Naive thymus-derived CD4-positive, alpha-beta T cell (primary cell): ENCODE measurements at regions of chr16 and their contacts with region 1.

Region 1: GRCh38 chr16:53703590-53704444 is at the starts of genes FTO and RPGRIP1L:
- DNase-seq: peak; percentile 85 to 97 (median 93)
- ATAC-seq: peak; percentile 95
- H3K4me3 ChIP-seq: peak within 1 kb of the TSS; percentile 78
- H3K4me3 Mint-ChIP-seq: peak within 1 kb of the TSS; percentile 85 to 100 (median 98)
- H3K27ac ChIP-seq: peak within 1 kb of the TSS; percentile 66
- H3K27ac Mint-ChIP-seq: peak within 1 kb of the TSS; percentile 90 to 99 (median 95)
- H3K4me1 ChIP-seq: peaks cover 15 to 16% of the 10 kb centered on the region in 2 donors
- H3K4me1 Mint-ChIP-seq: peaks cover 17 to 48% (median 42%) of the 10 kb centered on the region in 7 donors
- H3K27me3 ChIP-seq: no peaks in the 10 kb centered on the region
- H3K27me3 Mint-ChIP-seq: no peaks in the 10 kb centered on the region
- total RNA-seq, gene FTO: 47.2 to 63.5 (median 57.9) TPM
- total RNA-seq, gene RPGRIP1L: 2.0 to 6.1 (median 3.6) TPM

Region 2: DNA sequence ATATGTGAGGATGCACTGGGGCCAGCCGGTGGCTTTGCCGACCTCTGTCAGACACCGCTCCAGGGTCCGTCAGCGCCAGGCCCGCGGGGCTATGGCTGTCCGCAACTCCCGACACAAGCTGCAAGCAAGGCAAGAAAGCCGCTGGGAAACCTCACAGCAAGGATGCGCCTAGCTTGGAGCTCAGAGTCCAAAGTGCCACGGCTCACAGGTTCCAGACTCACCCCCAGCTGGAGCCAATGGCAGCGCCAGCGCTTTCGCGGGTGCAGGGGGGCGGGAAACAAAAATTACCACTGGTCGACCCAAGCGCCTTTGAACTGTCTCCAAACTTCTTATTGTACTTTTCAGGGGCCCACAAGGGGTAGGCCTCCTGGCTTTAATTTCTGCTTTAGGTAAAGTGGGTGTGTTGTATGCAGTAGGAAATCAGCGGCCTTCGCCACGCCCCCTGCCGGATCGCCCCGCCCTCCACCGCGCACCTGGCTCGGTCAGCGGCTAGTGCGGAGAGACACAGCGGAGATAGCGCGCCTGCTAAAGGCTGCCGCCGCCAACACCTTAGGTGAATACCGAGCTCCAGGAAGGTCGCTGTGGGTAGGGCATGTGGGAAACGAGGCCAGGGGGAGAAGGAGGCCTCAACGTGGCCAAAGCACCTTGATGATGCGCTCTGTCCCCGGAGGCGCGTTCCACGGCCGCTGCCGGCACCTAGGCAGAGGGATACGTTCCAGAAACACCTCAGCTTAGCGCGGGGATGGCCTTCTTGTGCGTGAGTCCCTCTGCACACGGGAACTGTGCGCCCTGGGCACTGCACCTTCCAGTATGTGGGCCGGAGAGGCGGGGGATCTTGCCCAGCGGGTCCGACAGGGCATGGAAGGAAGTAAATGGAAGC is 330.6 kb before region 1 on chr16:
- CTCF ChIA-PET with region 1: no interaction called
- POLR2A ChIA-PET with region 1: no interaction called
- intact Hi-C with region 1: loop called in 1 of 2 experiments (anchors 5 kb)
- DNase-seq: peak; percentile 64 to 87 (median 84)
- ATAC-seq: peak; percentile 96
- H3K4me3 ChIP-seq: peak overlapping the region; percentile 84
- H3K4me3 Mint-ChIP-seq: peak overlapping the region in 1 of 10 donors; percentile 86
- H3K27ac ChIP-seq: peak overlapping the region; percentile 67
- H3K27ac Mint-ChIP-seq: peak overlapping the region in 8 of 9 donors; percentile 48 to 95 (median 88)
- H3K4me1 ChIP-seq: peaks cover 4 to 7% of the 10 kb centered on the region in 2 donors
- H3K4me1 Mint-ChIP-seq: peaks cover 11 to 44% (median 20%) of the 10 kb centered on the region in 7 donors
- H3K27me3 ChIP-seq: no peaks in the 10 kb centered on the region
- H3K27me3 Mint-ChIP-seq: peaks cover 0 to 32% (median 0%) of the 10 kb centered on the region in 5 donors

Region 3: GRCh38 chr16:53503270-53503923 is 200.4 kb before region 1 on chr16:
- CTCF ChIA-PET with region 1: no interaction called
- POLR2A ChIA-PET with region 1: no interaction called
- intact Hi-C with region 1: loop called (anchors 1 kb)
- DNase-seq: peak; percentile 94 to 100 (median 100)
- ATAC-seq: peak; percentile 94
- H3K4me3 ChIP-seq: peak overlapping the region; percentile 66
- H3K4me3 Mint-ChIP-seq: peak overlapping the region; percentile 86 to 97 (median 94)
- H3K27ac ChIP-seq: peak overlapping the region; percentile 79
- H3K27ac Mint-ChIP-seq: peak overlapping the region; percentile 82 to 98 (median 92)
- H3K4me1 ChIP-seq: peaks cover 25 to 38% of the 10 kb centered on the region in 2 donors
- H3K4me1 Mint-ChIP-seq: peaks cover 36 to 54% (median 45%) of the 10 kb centered on the region in 7 donors
- H3K27me3 ChIP-seq: no peaks in the 10 kb centered on the region
- H3K27me3 Mint-ChIP-seq: no peaks in the 10 kb centered on the region

Region 4: GRCh38 chr16:53549970-53550690 is 153.7 kb before region 1 on chr16:
- CTCF ChIA-PET with region 1: no interaction called
- POLR2A ChIA-PET with region 1: no interaction called
- intact Hi-C with region 1: loop called in 1 of 2 experiments (anchors 2 kb)
- DNase-seq: peak in 8 of 9 donors; percentile 33 to 66 (median 52)
- ATAC-seq: peak; percentile 71
- H3K4me3 ChIP-seq: no peak overlapping the region
- H3K4me3 Mint-ChIP-seq: peak overlapping the region in 1 of 10 donors; percentile 7
- H3K27ac ChIP-seq: no peak overlapping the region
- H3K27ac Mint-ChIP-seq: no peak overlapping the region
- H3K4me1 ChIP-seq: peaks cover 8 to 15% of the 10 kb centered on the region in 2 donors
- H3K4me1 Mint-ChIP-seq: peaks cover 11 to 39% (median 27%) of the 10 kb centered on the region in 7 donors
- H3K27me3 ChIP-seq: peaks cover 0 to 8% of the 10 kb centered on the region in 2 donors
- H3K27me3 Mint-ChIP-seq: peaks cover 17 to 44% (median 19%) of the 10 kb centered on the region in 5 donors

Region 5: DNA sequence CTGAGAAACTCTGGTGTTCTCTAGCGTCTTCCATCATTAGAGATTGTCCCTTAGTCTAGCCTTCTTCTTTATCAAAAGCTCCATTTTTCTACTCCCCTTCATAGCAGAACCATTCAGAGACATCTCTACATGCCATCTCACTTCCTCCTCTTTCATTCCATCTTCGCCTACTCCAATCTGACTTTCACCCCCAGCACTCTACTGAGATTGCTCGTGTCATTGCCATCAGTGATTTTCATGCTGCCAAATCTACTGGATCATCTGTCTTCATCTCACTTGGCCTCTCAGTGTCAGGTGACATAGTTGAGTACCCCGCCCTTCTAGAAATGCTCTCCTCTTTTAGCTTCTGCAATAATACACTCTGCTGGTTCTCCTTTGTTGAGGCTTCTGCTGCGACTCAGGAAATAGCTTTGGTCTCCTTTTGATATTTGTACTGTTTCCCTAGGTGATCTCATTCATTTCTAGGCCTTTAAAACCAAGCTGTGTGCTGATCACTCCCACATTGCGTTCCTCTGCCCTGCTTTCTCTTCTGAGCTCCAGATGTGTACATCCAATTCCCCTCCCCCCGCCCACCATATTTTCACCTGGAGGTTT is 119.2 kb after region 1 on chr16:
- CTCF ChIA-PET with region 1: no interaction called
- POLR2A ChIA-PET with region 1: no interaction called
- intact Hi-C with region 1: loop called in 1 of 2 experiments (anchors 1 kb)
- DNase-seq: peak in 7 of 9 donors; percentile 63 to 86 (median 77)
- ATAC-seq: peak; percentile 97
- H3K4me3 ChIP-seq: no peak overlapping the region
- H3K4me3 Mint-ChIP-seq: no peak overlapping the region
- H3K27ac ChIP-seq: peak overlapping the region; percentile 47
- H3K27ac Mint-ChIP-seq: no peak overlapping the region
- H3K4me1 ChIP-seq: peaks cover 8 to 23% of the 10 kb centered on the region in 2 donors
- H3K4me1 Mint-ChIP-seq: peaks cover 0 to 19% (median 16%) of the 10 kb centered on the region in 7 donors
- H3K27me3 ChIP-seq: no peaks in the 10 kb centered on the region
- H3K27me3 Mint-ChIP-seq: no peaks in the 10 kb centered on the region

Region 6: GRCh38 chr16:53913099-53913870 is 209.5 kb after region 1 on chr16:
- CTCF ChIA-PET with region 1: no interaction called
- POLR2A ChIA-PET with region 1: no interaction called
- intact Hi-C with region 1: loop called in 1 of 2 experiments (anchors 5 kb)
- DNase-seq: peak in 1 of 9 donors; percentile 25
- ATAC-seq: no peak
- H3K4me3 ChIP-seq: no peak overlapping the region
- H3K4me3 Mint-ChIP-seq: peak overlapping the region in 8 of 10 donors; percentile 0 to 64 (median 38)
- H3K27ac ChIP-seq: no peak overlapping the region
- H3K27ac Mint-ChIP-seq: peak overlapping the region in 6 of 9 donors; percentile 17 to 72 (median 52)
- H3K4me1 ChIP-seq: peaks cover 15 to 33% of the 10 kb centered on the region in 2 donors
- H3K4me1 Mint-ChIP-seq: peaks cover 0 to 49% (median 0%) of the 10 kb centered on the region in 7 donors
- H3K27me3 ChIP-seq: no peaks in the 10 kb centered on the region
- H3K27me3 Mint-ChIP-seq: no peaks in the 10 kb centered on the region

Region 7: DNA sequence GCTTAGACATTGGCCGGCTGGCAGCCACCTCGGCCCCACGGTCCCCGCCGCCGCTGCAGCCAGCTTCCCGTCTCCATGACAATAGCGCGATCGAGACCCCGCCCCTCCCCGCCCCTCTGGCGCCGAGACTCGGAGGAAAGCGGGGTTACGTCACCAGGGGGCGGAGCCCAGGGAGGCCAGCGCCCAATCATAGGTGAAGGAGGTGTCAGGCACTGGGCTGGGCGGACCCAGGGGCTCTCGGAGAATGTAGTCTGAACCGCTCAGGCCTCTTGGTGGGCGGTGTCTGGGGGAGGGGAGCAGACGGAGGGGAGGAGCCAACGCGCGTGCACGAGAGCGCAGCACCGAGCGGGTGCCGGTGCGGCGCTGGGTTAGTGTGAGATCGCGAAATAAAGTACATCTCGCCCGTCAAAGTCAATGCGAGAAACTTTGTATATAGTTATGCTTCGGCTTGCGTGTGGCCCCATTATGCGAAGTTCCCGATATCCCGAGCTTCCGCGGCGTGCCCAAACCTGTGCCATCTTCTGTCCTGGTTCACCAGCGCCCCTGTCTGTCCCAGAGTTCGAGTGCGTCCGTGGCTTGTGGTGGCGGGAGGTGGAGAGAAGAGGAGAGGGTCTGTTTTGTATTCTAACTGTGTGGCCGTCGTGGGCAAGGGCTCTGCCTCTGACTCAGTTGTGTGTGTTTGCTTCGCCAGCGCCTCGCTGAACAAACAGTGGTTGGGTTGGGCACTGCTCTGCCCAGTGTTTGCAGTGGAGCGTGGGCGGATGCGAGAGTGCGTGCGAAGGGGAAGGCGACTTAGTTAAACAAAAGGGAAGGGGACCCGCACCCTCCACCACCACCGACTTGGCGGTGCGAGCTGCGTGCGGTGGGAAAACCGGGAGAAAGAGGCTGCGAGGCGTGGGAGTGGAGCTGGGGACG is 1225.5 kb after region 1 on chr16:
- CTCF ChIA-PET with region 1: no interaction called
- POLR2A ChIA-PET with region 1: no interaction called
- intact Hi-C with region 1: loop called in 1 of 2 experiments (anchors 1 kb)
- DNase-seq: peak; percentile 82 to 96 (median 88)
- ATAC-seq: peak; percentile 97
- H3K4me3 ChIP-seq: peak overlapping the region; percentile 70
- H3K4me3 Mint-ChIP-seq: peak overlapping the region; percentile 84 to 96 (median 93)
- H3K27ac ChIP-seq: no peak overlapping the region
- H3K27ac Mint-ChIP-seq: peak overlapping the region in 7 of 9 donors; percentile 13 to 93 (median 59)
- H3K4me1 ChIP-seq: peaks cover 9 to 12% of the 10 kb centered on the region in 2 donors
- H3K4me1 Mint-ChIP-seq: peaks cover 16 to 36% (median 32%) of the 10 kb centered on the region in 7 donors
- H3K27me3 ChIP-seq: peaks cover 8 to 47% of the 10 kb centered on the region in 2 donors
- H3K27me3 Mint-ChIP-seq: peaks cover 63 to 73% (median 68%) of the 10 kb centered on the region in 5 donors